Psoas muscle (tissue), 8 donors: ENCODE measurements at regions of chr1 and their contacts with region 1.

Region 1: GRCh38 chr1:201447911-201448871 is 20.8 kb downstream of the PHLDA3 start:
- DNase-seq: peak; percentile 82 to 90
- ATAC-seq: peak; percentile 93 to 98 (median 96)
- H3K4me3 ChIP-seq: no peak overlapping the region
- H3K27ac ChIP-seq: peak overlapping the region; percentile 46
- H3K4me1 ChIP-seq: peaks cover 21% of the 10 kb centered on the region
- H3K27me3 ChIP-seq: no peaks in the 10 kb centered on the region
- CTCF ChIP-seq: peak; percentile 88

Region 2: GRCh38 chr1:201511941-201512539 is 63.8 kb after region 1 on chr1:
- intact Hi-C with region 1: loop called (anchors 2 kb)
- DNase-seq: peak; percentile 63 to 77
- ATAC-seq: peak; percentile 41 to 59 (median 52)
- H3K4me3 ChIP-seq: no peak overlapping the region
- H3K27ac ChIP-seq: peak overlapping the region; percentile 60
- H3K4me1 ChIP-seq: peaks cover 12% of the 10 kb centered on the region
- H3K27me3 ChIP-seq: no peaks in the 10 kb centered on the region
- CTCF ChIP-seq: no peak